Ascending aorta (tissue), 2 donors: ENCODE measurements at regions of chr6 and their contacts with region 1.

Region 1: GRCh38 chr6:152982768-152983636 is at the start of gene FBXO5:
- DNase-seq: peak; percentile 92 to 99
- H3K4me3 ChIP-seq: peak within 1 kb of the TSS; percentile 63 to 93
- H3K27ac ChIP-seq: peak within 1 kb of the TSS; percentile 85 to 90
- H3K4me1 ChIP-seq: peaks cover 12 to 13% of the 10 kb centered on the region in 2 donors
- H3K27me3 ChIP-seq: no peaks in the 10 kb centered on the region
- CTCF ChIP-seq: no peak
- total RNA-seq, gene FBXO5: not detected

Region 2: DNA sequence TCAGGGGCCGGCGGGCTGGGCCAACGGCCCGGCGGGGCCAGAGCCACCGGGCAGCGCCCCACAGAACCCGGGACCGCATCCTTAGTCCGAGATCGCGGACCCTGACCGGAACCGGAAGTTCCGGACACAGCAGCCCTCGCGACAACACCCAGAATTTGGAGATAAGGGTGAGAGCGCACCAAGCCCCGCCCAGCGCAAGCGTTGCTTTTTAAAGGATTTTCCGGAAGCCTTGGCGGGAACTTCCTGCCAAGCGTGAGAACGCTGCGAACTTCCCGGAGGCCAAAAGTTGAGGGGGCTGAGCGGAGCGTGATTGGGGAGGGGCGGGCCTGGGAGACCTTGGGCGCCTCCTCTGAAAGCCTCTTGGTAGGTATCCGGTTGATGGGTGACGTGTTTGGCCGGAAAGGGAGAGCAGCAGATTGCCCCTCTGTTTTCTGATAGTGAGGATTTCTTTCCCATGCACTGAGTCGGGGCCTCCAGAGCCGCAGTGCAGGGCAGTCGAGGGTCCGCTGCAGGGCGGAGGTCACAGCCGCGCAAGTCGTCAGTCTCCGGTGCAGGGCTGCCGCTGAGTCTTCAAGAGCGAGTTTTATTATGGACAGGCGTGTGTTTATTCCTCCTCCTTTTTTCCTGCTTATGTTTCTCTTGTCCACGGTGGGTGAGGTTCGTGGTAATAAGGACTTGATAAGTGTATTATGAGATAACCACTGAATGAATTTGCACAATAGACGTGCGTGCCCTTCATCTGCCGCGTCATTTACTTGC is 19.8 kb after region 1 on chr6 and contains the start of gene MTRF1L:
- intact Hi-C with region 1: loop called (anchors 2 kb)
- DNase-seq: peak; percentile 73 to 96
- H3K4me3 ChIP-seq: peak within 1 kb of the TSS; percentile 70 to 85
- H3K27ac ChIP-seq: peak within 1 kb of the TSS; percentile 82 to 85
- H3K4me1 ChIP-seq: peaks cover 3 to 18% of the 10 kb centered on the region in 2 donors
- H3K27me3 ChIP-seq: no peaks in the 10 kb centered on the region
- CTCF ChIP-seq: no peak
- total RNA-seq, gene MTRF1L: 105 TPM

Region 3: GRCh38 chr6:153013438-153013837 is 30.4 kb after region 1 on chr6:
- intact Hi-C with region 1: no loop called
- DNase-seq: no peak
- H3K4me3 ChIP-seq: no peak overlapping the region
- H3K27ac ChIP-seq: no peak overlapping the region
- H3K4me1 ChIP-seq: no peaks in the 10 kb centered on the region
- H3K27me3 ChIP-seq: no peaks in the 10 kb centered on the region
- CTCF ChIP-seq: no peak

Region 4: GRCh38 chr6:153048631-153049030 is 65.6 kb after region 1 on chr6:
- intact Hi-C with region 1: no loop called
- DNase-seq: no peak
- H3K4me3 ChIP-seq: no peak overlapping the region
- H3K27ac ChIP-seq: no peak overlapping the region
- H3K4me1 ChIP-seq: no peaks in the 10 kb centered on the region
- H3K27me3 ChIP-seq: no peaks in the 10 kb centered on the region
- CTCF ChIP-seq: no peak

Region 5: GRCh38 chr6:153312641-153313040 is 329.6 kb after region 1 on chr6:
- intact Hi-C with region 1: no loop called
- DNase-seq: peak in 1 of 2 donors; percentile 64
- H3K4me3 ChIP-seq: no peak overlapping the region
- H3K27ac ChIP-seq: no peak overlapping the region
- H3K4me1 ChIP-seq: no peaks in the 10 kb centered on the region
- H3K27me3 ChIP-seq: no peaks in the 10 kb centered on the region
- CTCF ChIP-seq: peak in 1 of 3 experiments; percentile 8

Region 6: GRCh38 chr6:154661768-154662167 is 1678.8 kb after region 1 on chr6:
- intact Hi-C with region 1: no loop called
- DNase-seq: no peak
- H3K4me3 ChIP-seq: no peak overlapping the region
- H3K27ac ChIP-seq: no peak overlapping the region
- H3K4me1 ChIP-seq: no peaks in the 10 kb centered on the region
- H3K27me3 ChIP-seq: no peaks in the 10 kb centered on the region
- CTCF ChIP-seq: no peak